ENCODE measurements at regions of chr1 and their contacts with region 1.

Region 1: GRCh38 chr1:3012456-3013291 is 8.6 kb upstream of the ACTRT2 start:
- DNase-seq: peak; percentile 22 to 85 (median 73)
- H3K4me3 ChIP-seq: peak overlapping the region in 43 of 59 donors; percentile 1 to 57 (median 31)
- H3K27ac ChIP-seq: peak overlapping the region in 57 of 59 donors; percentile 26 to 98 (median 85)
- H3K27me3 ChIP-seq: peaks cover 0 to 51% (median 3%) of the 10 kb centered on the region in 45 donors
- CTCF ChIP-seq: peak; percentile 43 to 97 (median 90)

Region 2: DNA sequence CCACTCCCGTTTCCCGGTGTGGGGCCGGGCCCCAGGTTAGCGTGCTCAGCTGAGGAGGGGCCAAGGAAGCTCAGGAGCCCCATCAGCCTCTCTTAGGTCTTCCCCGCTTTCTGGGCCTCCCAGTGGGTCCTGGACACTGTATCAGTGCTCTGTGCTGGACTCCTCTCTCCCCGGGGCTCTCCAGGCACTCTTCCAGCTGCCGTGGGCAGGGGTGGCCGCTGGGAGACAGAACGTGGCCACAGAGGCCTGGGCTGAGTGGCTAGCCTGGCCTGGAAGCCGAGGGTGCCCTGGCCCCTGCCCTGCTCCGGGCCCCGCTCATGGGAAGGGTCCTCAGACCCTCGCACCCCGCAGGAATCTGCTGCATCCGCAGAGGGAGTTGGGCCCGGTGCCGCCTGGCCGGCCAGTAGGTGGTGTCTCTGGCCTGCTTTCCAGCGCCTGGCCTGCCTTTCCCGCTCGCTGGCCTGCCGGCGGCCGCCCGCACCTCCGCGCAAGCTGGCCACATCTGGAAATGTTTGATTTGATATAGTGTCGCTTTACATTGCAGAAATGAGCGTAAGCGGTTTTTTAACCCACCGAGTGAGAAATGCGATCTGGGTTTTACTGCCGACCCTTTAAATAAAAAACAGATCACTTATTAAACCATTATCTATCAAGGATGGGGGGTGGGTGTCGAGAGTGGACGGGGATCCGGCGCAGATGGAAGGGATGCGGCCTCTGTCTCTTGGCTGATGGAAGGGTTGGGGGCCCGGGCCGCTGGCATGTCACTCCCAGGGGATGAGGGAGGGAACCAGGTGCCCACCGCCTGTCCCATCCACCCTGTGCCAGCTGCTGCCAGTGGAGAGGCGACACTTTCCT is 136.7 kb before region 1 on chr1:
- intact Hi-C with region 1: loop called (anchors 5 to 10 kb)
- DNase-seq: peak in 6 of 10 donors; percentile 30 to 75 (median 55)
- H3K4me3 ChIP-seq: no peak overlapping the region
- H3K27ac ChIP-seq: no peak overlapping the region
- H3K27me3 ChIP-seq: peaks cover 0 to 13% (median 0%) of the 10 kb centered on the region in 45 donors
- CTCF ChIP-seq: peak in 54 of 56 donors; percentile 43 to 88 (median 70)

Region 3: GRCh38 chr1:2914702-2915101 is 98.0 kb before region 1 on chr1:
- intact Hi-C with region 1: loop called in 1 of 2 experiments (anchors 5 kb)
- DNase-seq: peak in 6 of 10 donors; percentile 38 to 54 (median 47)
- H3K4me3 ChIP-seq: no peak overlapping the region
- H3K27ac ChIP-seq: peak overlapping the region in 11 of 59 donors; percentile 8 to 57 (median 30)
- H3K27me3 ChIP-seq: no peaks in the 10 kb centered on the region
- CTCF ChIP-seq: peak in 47 of 56 donors; percentile 14 to 65 (median 40)

Region 4: GRCh38 chr1:3219005-3219790 is 206.5 kb after region 1 on chr1:
- intact Hi-C with region 1: loop called in 1 of 2 experiments (anchors 5 kb)
- DNase-seq: peak; percentile 45 to 97 (median 93)
- H3K4me3 ChIP-seq: peak overlapping the region in 19 of 59 donors; percentile 5 to 44 (median 22)
- H3K27ac ChIP-seq: peak overlapping the region in 47 of 59 donors; percentile 16 to 87 (median 65)
- H3K27me3 ChIP-seq: peaks cover 0 to 18% (median 0%) of the 10 kb centered on the region in 45 donors
- CTCF ChIP-seq: peak in 12 of 56 donors; percentile 5 to 39 (median 19)

Region 5: GRCh38 chr1:3283849-3284248 is 271.2 kb after region 1 on chr1:
- intact Hi-C with region 1: loop called (anchors 2 to 5 kb)
- DNase-seq: peak in 6 of 10 donors; percentile 36 to 72 (median 51)
- H3K4me3 ChIP-seq: no peak overlapping the region
- H3K27ac ChIP-seq: peak overlapping the region in 7 of 59 donors; percentile 1 to 41 (median 10)
- H3K27me3 ChIP-seq: peaks cover 0 to 44% (median 0%) of the 10 kb centered on the region in 45 donors
- CTCF ChIP-seq: peak; percentile 43 to 88 (median 77)

Region 6: DNA sequence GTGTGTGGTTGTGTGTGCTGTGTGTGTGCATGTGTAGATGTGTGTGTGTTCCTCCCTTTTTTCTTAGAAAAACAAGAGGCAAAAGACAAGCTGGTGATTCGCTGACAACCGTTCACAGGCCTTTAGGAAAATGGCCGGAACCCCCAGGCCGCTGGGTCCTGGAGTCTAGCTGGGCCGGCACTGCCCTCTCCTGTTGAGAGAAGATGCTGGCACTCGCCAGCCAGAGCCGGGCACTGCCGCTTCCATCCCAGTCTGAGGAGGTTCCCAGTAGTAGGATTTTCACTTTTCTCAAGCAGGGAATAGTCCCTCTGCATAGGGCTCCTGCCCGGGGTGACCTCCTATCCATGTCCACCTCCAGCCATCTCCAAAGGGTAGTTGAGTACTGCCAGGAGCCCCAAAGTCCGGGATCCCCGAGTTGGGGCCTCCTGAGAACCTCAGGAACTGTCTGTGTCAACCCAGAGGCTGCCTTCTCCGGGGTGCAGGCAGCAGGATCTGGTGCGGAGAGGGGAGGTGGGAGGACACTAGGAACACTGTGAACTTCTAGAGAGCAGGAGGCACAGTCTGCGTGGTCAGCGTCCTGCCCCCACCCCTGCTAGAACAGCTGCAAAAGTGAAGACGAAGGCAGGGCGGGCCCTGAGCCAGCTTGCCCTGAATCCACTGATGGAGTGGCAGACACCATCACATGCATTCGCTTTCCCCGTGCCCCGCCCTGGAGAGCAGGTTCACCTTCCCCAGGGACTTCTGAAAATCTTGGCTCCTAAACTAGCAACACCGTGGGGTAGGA is 397.7 kb after region 1 on chr1:
- intact Hi-C with region 1: loop called (anchors 5 kb)
- DNase-seq: peak; percentile 40 to 87 (median 84)
- H3K4me3 ChIP-seq: no peak overlapping the region
- H3K27ac ChIP-seq: peak overlapping the region in 5 of 59 donors; percentile 2 to 36 (median 19)
- H3K27me3 ChIP-seq: no peaks in the 10 kb centered on the region
- CTCF ChIP-seq: peak in 55 of 56 donors; percentile 49 to 93 (median 81)

Region 7: DNA sequence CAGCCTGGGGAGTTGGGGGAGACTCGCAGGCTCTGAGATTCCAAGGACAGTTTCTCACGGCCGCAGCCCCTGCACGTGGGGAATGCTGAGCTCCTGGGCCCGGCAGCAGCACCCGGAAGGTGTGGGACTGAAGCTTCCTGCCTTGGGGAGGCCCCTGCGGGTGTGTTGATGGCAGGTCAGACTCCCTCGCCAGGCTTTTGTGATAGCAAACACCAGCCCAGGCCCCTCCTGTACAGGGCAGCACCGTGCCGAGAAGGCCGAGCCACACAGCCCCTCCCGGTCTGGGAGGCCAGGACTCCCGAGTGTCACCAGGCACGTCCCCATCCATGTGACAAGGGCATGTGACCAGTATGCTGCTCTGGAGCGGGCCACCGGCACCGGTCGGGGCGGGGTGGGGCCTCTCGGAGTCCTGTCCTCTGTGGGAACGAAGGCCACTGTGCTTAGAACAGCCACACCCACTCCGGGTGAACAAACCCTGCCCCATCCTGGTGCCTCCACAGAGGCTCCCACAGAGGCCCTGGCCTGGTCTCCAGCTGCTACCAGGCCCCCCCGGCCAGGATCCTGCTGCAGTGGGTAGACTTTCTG is 410.7 kb after region 1 on chr1:
- intact Hi-C with region 1: loop called in 1 of 2 experiments (anchors 5 kb)
- DNase-seq: peak in 9 of 10 donors; percentile 47 to 79 (median 69)
- H3K4me3 ChIP-seq: no peak overlapping the region
- H3K27ac ChIP-seq: peak overlapping the region in 52 of 59 donors; percentile 19 to 85 (median 68)
- H3K27me3 ChIP-seq: no peaks in the 10 kb centered on the region
- CTCF ChIP-seq: peak in 2 of 56 donors; percentile 12 to 16